CD4-positive, alpha-beta T cell (primary cell): ENCODE measurements at regions of chr16 and their contacts with region 1.

Region 1: DNA sequence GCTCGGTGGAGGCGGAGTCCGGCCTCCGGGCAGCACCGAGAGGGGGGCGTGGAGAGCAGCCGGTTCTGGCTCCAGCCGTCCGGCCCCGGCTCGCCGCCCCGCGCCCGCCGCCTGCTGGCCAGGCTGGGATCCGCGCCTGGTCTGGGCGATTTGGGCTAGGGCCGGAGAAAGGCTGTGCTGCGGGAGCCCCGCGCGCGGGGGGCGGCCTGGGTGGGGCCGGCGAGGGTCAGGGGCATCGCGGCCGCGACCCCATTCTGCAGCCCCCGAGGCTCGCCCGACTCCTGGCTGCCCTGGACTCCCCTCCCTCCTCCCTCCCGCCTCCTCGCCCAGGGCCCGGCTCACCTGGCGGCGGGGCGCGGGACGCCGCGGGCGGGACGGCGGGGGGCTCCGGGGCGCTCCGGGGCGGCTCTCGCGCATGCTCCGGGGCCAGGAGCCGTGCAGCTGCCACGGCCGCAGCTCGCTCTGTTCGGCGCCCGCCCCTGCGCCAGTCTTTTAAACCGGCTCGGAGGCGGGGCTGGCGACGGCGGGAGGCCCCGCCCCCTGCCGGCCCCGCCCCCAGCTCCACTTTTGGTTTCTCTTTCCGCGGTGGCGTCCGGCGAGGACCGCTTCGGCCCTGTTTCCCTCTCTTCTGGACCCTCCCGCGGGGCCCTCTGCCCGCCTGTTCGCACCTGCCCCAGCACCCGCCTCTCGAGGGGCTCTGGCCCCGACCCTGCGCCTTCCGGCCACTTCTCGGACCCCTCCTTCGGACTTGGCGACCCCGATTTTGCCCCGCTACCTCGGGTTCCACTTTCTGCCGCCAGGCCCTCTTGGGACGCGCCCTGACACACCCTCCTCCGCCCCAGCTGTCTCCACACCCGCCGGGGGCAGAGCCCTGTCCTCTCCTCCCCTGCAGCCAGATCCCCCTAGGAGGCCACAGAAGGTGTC is at the start of gene SOCS1:
- DNase-seq: peak; percentile 72 to 95 (median 88)
- ATAC-seq: peak; percentile 58
- H3K4me3 ChIP-seq: peak within 1 kb of the TSS; percentile 96
- H3K4me3 Mint-ChIP-seq: peak within 1 kb of the TSS; percentile 99
- H3K27ac ChIP-seq: peak within 1 kb of the TSS; percentile 83 to 86
- H3K27ac Mint-ChIP-seq: peak within 1 kb of the TSS; percentile 97
- H3K4me1 ChIP-seq: peaks cover 66% of the 10 kb centered on the region
- H3K4me1 Mint-ChIP-seq: peaks cover 56% of the 10 kb centered on the region
- H3K27me3 ChIP-seq: no peaks in the 10 kb centered on the region
- H3K27me3 Mint-ChIP-seq: no peaks in the 10 kb centered on the region
- CTCF ChIP-seq: peak; percentile 75
- total RNA-seq, gene SOCS1: 71.3 to 71.4 TPM

Region 2: DNA sequence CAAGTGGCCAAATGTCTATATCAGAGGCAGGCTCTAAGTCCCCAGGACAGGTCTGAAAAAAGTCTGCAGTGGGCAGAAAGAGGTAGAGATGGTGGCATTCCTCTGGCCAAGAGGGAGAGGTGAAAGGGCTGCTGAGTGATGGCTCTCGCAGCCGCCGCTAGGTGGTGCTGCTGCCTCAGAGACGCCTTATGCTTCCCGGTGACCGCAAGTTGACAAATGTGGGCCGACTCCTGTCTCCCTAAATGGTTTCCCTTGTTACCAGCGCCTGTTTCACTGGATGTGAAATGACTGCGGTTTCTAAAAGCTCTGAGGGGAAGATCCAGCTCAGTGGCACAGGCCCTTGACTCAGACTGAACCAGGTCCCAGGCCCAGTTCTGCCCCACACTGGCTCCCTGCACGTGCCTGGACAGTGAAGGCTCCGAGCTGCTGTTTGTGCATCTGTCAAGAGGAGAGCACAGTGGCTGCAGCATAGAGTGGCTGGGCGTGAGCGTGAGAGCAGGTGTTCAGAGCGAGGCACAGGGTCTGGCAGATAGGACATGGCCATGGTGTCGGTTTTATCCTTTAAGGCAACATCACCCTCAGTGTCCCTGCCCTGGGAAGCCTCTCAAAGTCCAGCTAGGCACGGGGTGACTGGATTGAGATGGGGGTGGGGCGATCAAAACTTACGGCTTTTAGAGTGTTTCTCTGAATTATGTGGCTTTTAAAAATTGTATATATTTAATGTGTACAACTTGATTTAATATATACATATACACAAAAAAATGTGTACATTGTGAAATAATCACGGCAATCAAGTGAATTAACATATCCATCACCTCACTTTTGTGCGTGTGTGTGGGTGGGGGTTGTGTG is 291.7 kb before region 1 on chr16:
- CTCF ChIA-PET with region 1: interaction called, 50 read pairs
- POLR2A ChIA-PET with region 1: interaction called, 43 read pairs
- intact Hi-C with region 1: loop called in 1 of 2 experiments (anchors 1 kb)
- DNase-seq: peak; percentile 65 to 91 (median 78)
- ATAC-seq: peak; percentile 49
- H3K4me3 ChIP-seq: peak overlapping the region; percentile 9
- H3K4me3 Mint-ChIP-seq: peak overlapping the region; percentile 38
- H3K27ac ChIP-seq: no peak overlapping the region
- H3K27ac Mint-ChIP-seq: peak overlapping the region; percentile 76
- H3K4me1 ChIP-seq: peaks cover 28% of the 10 kb centered on the region
- H3K4me1 Mint-ChIP-seq: peaks cover 30% of the 10 kb centered on the region
- H3K27me3 ChIP-seq: no peaks in the 10 kb centered on the region
- H3K27me3 Mint-ChIP-seq: no peaks in the 10 kb centered on the region
- CTCF ChIP-seq: peak; percentile 99

Region 3: DNA sequence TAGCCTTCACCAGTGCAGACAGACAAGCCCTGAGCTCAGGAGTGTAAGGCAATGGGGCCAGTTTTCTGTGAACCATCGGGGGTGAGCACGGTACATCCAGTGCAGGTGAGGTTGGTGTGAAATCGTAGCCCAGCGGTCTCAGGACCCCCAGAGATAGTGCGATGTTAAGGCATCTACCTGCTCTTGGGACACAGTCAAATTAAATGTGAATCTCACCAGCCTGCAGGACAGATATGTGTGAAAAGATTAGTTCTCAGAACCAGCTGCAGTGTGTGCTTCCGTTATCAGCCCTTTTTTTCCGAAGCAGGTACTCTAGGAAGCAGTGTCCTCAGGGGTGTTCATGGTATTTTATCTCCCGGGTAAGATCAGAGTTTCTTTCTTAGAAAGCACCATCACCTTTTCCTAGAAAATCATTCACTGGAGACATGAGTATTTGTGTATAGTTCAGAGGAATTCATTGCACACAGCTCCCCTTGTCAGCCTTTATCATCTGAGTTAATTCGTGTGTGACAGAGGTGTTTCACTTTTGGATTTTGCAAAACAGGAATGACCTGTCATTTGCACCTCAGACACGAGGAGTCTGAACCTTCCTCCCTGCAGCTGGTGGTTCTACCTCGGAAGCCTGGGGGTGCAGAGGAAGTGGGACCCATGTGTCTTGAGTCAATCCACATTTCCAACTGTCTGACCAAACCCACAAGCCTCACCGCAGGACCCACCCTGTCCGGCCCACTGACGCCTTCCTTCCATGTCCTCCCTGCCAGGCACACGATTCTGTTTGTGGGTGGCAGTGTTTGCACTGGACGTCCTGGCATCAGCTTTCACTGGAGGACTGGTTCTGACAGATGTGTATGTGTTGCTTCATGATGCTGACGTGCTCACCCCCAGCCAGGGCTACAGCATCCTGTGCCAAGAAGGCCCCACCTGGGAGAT is 203.9 kb before region 1 on chr16:
- CTCF ChIA-PET with region 1: no interaction called
- POLR2A ChIA-PET with region 1: interaction called, 10 read pairs
- intact Hi-C with region 1: no loop called
- DNase-seq: peak in 7 of 14 experiments; percentile 2 to 61 (median 24)
- ATAC-seq: peak; percentile 43
- H3K4me3 ChIP-seq: peak overlapping the region; percentile 2
- H3K4me3 Mint-ChIP-seq: peak overlapping the region; percentile 30
- H3K27ac ChIP-seq: no peak overlapping the region
- H3K27ac Mint-ChIP-seq: peak overlapping the region; percentile 54
- H3K4me1 ChIP-seq: peaks cover 33% of the 10 kb centered on the region
- H3K4me1 Mint-ChIP-seq: peaks cover 46% of the 10 kb centered on the region
- H3K27me3 ChIP-seq: no peaks in the 10 kb centered on the region
- H3K27me3 Mint-ChIP-seq: no peaks in the 10 kb centered on the region
- CTCF ChIP-seq: no peak

Region 4: DNA sequence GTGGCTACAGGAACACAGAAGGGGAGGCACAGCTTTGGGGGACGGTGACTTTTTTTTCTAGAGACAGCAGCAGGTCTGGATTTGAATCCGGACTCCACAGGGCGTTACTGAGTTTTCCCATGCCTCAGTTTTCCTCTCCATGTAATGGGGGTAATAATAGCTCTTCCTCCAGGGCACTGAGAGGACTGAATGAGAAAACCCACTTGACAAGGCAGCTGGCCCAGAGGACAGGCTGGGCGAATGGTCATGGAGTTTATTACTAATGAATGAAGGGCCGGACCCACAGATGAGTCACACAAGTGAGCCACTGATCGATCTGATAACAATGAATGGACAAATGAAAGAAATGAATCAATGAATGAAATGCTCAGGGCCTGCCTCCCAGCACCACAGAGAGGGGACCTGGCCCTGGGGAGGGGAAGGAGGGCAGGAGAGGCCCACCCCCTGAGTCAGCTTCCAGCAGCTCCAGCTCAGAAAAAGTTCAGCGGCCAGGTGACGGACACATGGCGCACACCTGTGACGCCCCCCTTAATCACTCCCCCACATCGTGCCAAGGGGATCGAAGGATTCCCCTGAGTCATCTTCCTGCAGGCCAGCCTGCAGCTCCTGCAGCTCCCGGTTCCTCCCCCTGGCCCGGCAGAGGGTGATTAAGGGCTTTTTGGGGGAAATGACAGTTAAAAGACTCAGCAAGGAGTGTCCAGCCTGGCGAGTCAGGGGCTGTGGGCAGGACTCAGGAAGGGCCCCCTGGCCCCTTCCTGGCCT is 54.3 kb before region 1 on chr16:
- CTCF ChIA-PET with region 1: no interaction called
- POLR2A ChIA-PET with region 1: no interaction called
- intact Hi-C with region 1: loop called in 1 of 2 experiments (anchors 10 kb)
- DNase-seq: peak in 2 of 14 experiments; percentile 49 to 64
- ATAC-seq: no peak
- H3K4me3 ChIP-seq: no peak overlapping the region
- H3K4me3 Mint-ChIP-seq: no peak overlapping the region
- H3K27ac ChIP-seq: no peak overlapping the region
- H3K27ac Mint-ChIP-seq: no peak overlapping the region
- H3K4me1 ChIP-seq: peaks cover 25% of the 10 kb centered on the region
- H3K4me1 Mint-ChIP-seq: peaks cover 6% of the 10 kb centered on the region
- H3K27me3 ChIP-seq: no peaks in the 10 kb centered on the region
- H3K27me3 Mint-ChIP-seq: no peaks in the 10 kb centered on the region
- CTCF ChIP-seq: no peak

Region 5: DNA sequence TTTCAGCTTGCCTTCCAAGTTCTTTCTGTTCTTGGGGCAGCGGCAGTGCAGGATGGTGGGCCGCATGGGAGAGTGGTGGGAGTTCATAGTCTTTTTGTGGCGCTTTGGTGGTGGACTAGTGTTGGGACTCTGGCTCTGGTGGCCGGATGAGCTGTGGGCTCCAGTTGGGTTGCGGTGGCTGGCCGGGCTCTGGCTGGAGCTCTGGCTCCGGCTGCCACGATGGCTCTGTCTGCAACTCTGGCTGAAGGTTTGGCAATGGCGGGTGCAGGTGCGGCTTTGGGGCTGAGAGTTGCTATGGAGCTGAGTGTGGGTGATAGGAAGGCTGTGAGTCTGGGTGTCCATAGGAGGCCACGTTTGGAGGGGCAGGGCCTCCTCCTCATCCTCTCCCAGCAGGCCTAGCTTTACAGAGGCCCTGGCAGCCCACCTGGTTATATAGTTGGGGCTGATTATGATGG is 12.9 kb after region 1 on chr16 and contains the start of gene TNP2:
- CTCF ChIA-PET with region 1: no interaction called
- POLR2A ChIA-PET with region 1: interaction called, 17 read pairs
- intact Hi-C with region 1: no loop called
- DNase-seq: no peak
- ATAC-seq: no peak
- H3K4me3 ChIP-seq: no peak within 1 kb of the TSS
- H3K4me3 Mint-ChIP-seq: no peak within 1 kb of the TSS
- H3K27ac ChIP-seq: no peak within 1 kb of the TSS
- H3K27ac Mint-ChIP-seq: no peak within 1 kb of the TSS
- H3K4me1 ChIP-seq: peaks cover 8% of the 10 kb centered on the region
- H3K4me1 Mint-ChIP-seq: peaks cover 6% of the 10 kb centered on the region
- H3K27me3 ChIP-seq: no peaks in the 10 kb centered on the region
- H3K27me3 Mint-ChIP-seq: no peaks in the 10 kb centered on the region
- CTCF ChIP-seq: no peak
- total RNA-seq, gene TNP2: not detected

Region 6: GRCh38 chr16:11278681-11279628 is 23.0 kb after region 1 on chr16:
- CTCF ChIA-PET with region 1: no interaction called
- POLR2A ChIA-PET with region 1: no interaction called
- intact Hi-C with region 1: no loop called
- DNase-seq: no peak
- ATAC-seq: no peak
- H3K4me3 ChIP-seq: no peak overlapping the region
- H3K4me3 Mint-ChIP-seq: no peak overlapping the region
- H3K27ac ChIP-seq: no peak overlapping the region
- H3K27ac Mint-ChIP-seq: no peak overlapping the region
- H3K4me1 ChIP-seq: no peaks in the 10 kb centered on the region
- H3K4me1 Mint-ChIP-seq: no peaks in the 10 kb centered on the region
- H3K27me3 ChIP-seq: no peaks in the 10 kb centered on the region
- H3K27me3 Mint-ChIP-seq: no peaks in the 10 kb centered on the region
- CTCF ChIP-seq: no peak

Region 7: DNA sequence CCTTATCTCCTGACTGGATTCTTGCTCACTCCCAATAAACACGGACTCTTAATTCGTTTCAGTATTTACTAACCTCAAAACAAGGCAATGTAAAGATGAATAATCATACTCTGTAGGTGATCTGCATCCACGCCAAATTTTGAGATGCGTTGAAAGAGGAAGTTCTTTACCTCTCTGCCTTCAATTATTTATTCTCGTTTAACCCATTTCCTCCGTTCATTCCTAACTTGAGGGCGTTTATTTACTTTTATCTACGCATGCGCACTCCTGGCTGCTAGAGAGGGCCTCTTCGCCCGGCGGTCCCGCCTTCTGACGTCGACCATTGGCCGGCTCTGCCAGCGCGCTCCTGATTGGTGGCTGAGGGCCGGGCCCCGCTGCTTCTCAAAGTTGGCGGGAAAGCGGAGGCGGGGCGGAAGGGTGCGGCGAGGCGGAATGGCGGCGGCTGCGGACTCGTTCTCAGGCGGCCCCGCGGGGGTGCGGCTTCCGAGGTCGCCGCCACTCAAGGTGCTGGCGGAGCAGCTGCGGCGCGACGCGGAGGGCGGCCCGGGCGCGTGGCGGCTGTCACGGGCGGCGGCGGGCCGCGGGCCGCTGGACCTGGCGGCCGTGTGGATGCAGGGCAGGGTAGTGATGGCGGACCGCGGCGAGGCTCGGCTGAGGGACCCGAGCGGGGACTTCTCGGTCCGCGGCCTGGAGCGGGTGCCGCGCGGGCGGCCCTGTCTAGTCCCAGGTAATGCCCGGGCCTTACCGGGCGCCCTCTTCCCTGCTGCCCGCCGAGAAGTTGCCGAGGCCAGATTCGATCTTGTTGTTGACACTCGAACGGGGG is 89.3 kb after region 1 on chr16 and contains the start of gene RMI2:
- CTCF ChIA-PET with region 1: interaction called, 3 read pairs
- POLR2A ChIA-PET with region 1: interaction called, 9 read pairs
- intact Hi-C with region 1: loop called in 1 of 2 experiments (anchors 2 kb)
- DNase-seq: peak; percentile 90 to 98 (median 96)
- ATAC-seq: peak; percentile 100
- H3K4me3 ChIP-seq: peak within 1 kb of the TSS; percentile 64
- H3K4me3 Mint-ChIP-seq: peak within 1 kb of the TSS; percentile 90
- H3K27ac ChIP-seq: no peak within 1 kb of the TSS
- H3K27ac Mint-ChIP-seq: peak within 1 kb of the TSS; percentile 48
- H3K4me1 ChIP-seq: peaks cover 20% of the 10 kb centered on the region
- H3K4me1 Mint-ChIP-seq: peaks cover 31% of the 10 kb centered on the region
- H3K27me3 ChIP-seq: no peaks in the 10 kb centered on the region
- H3K27me3 Mint-ChIP-seq: no peaks in the 10 kb centered on the region
- CTCF ChIP-seq: no peak
- total RNA-seq, gene RMI2: 1.3 to 1.5 TPM

Region 8: DNA sequence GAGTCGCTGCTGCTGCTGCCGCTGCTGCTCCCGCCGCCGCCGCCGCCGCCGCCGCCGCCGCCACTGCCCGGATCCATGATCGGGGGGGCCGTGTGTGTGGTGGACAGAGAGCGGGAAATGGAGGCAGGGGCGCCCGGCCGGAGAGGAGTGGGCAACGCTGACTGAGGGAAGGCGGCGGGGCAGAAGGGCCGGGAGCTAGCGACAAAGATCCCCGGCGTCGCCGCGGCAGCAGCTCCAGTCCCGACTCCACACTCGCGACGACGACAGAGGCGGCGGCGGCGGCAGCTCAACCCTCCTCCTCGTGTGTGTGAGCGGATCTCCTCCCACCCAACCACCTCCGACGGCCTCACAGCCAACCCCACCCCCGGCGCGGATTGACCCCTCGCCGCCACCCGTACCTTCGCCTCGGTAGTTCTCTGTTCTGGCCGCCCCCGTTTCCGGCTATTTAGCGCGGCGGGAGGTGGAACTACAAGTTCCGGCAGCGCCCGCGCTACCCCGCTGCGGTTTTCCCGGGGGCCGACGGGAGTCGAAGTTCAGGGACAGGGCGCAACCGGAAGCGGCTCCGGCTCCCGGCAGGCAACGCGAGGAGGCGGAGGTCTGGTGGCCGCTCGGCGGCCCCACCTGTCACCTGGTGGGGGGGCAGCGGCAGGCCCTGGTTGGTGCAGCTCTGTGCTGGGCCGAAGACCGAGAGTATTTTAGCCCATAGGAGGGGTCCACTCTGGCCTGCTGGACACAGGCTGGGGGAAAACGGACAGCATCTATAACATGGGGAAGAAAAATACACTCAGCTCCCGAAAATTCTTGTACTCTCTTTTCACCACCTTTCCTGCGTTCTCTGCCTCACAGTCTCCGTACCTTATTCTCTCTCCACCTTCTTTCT is 659.9 kb after region 1 on chr16 and contains the start of gene GSPT1:
- CTCF ChIA-PET with region 1: no interaction called
- POLR2A ChIA-PET with region 1: interaction called, 6 read pairs
- intact Hi-C with region 1: loop called in 1 of 2 experiments (anchors 10 kb)
- DNase-seq: peak; percentile 98 to 99 (median 99)
- ATAC-seq: peak; percentile 84
- H3K4me3 ChIP-seq: peak within 1 kb of the TSS; percentile 82
- H3K4me3 Mint-ChIP-seq: peak within 1 kb of the TSS; percentile 98
- H3K27ac ChIP-seq: peak within 1 kb of the TSS; percentile 84 to 86
- H3K27ac Mint-ChIP-seq: peak within 1 kb of the TSS; percentile 98
- H3K4me1 ChIP-seq: peaks cover 32% of the 10 kb centered on the region
- H3K4me1 Mint-ChIP-seq: peaks cover 33% of the 10 kb centered on the region
- H3K27me3 ChIP-seq: peaks cover 0 to 2% of the 10 kb centered on the region in 2 experiments
- H3K27me3 Mint-ChIP-seq: no peaks in the 10 kb centered on the region
- CTCF ChIP-seq: no peak
- total RNA-seq, gene GSPT1: 257 to 269 TPM